ENCODE measurements at regions of chr4 and their contacts with region 1.

Region 1: GRCh38 chr4:123102897-123103471 is 180.6 kb upstream of the NUDT6 start:
- DNase-seq: peak in 3 of 14 experiments; percentile 24 to 26 (median 25)
- ATAC-seq: peak; percentile 37
- H3K4me3 ChIP-seq: no peak overlapping the region
- H3K4me3 Mint-ChIP-seq: no peak overlapping the region
- H3K27ac ChIP-seq: no peak overlapping the region
- H3K27ac Mint-ChIP-seq: no peak overlapping the region
- H3K4me1 ChIP-seq: no peaks in the 10 kb centered on the region
- H3K4me1 Mint-ChIP-seq: no peaks in the 10 kb centered on the region
- H3K27me3 ChIP-seq: no peaks in the 10 kb centered on the region
- H3K27me3 Mint-ChIP-seq: no peaks in the 10 kb centered on the region
- CTCF ChIP-seq: peak; percentile 64

Region 2: GRCh38 chr4:123127218-123127617 is 24.2 kb after region 1 on chr4:
- CTCF ChIA-PET with region 1: no interaction called
- POLR2A ChIA-PET with region 1: no interaction called
- intact Hi-C with region 1: no loop called
- DNase-seq: no peak
- ATAC-seq: no peak
- H3K4me3 ChIP-seq: no peak overlapping the region
- H3K4me3 Mint-ChIP-seq: no peak overlapping the region
- H3K27ac ChIP-seq: no peak overlapping the region
- H3K27ac Mint-ChIP-seq: no peak overlapping the region
- H3K4me1 ChIP-seq: no peaks in the 10 kb centered on the region
- H3K4me1 Mint-ChIP-seq: no peaks in the 10 kb centered on the region
- H3K27me3 ChIP-seq: no peaks in the 10 kb centered on the region
- H3K27me3 Mint-ChIP-seq: no peaks in the 10 kb centered on the region
- CTCF ChIP-seq: no peak

Region 3: DNA sequence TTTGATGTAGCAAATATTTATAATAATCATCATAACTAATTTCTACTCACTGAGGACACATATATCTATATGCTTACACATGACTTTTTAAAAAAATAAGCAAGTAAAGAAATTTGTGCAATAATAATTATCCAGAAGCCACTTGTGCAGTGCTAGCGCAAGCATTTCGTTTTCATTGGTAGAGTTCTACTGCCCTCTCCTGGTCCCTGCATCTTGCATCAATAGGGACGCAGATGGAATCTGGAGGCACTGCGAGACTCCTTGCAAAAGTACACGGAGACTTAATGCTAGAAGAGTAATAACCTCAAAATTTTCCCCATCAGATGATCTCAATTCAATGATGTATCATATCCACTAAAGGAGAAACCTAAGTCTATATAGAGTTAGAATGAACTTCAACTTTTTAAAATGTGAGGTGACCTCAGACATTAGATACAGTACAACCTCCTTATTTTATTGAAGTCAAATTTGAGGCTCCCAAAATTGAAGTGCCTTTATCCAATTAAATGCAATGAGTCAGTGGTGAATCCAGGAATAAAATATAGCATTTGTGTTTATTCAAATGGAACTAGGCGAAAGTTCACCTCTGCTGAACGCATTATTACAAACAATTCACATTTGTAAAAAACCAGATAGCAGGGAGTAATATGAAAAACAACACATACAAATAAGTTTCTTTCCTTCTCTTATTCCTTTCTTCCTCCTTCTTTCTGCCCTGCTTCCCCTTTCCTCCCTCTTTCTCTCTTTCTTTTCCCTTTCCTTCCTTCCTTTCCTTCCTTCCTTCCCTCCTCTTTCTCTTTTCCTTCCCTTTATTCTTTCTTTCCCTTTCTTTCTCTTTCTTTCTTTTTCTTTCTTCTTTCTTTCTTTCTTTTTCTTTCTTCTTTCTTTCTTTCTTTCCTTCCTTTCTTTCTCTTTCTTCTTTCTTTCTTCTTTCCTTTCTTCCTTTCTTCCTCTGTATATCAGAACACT is 1159.5 kb after region 1 on chr4:
- CTCF ChIA-PET with region 1: no interaction called
- POLR2A ChIA-PET with region 1: no interaction called
- intact Hi-C with region 1: loop called in 1 of 2 experiments (anchors 2 kb)
- DNase-seq: peak in 6 of 14 experiments; percentile 5 to 56 (median 32)
- ATAC-seq: no peak
- H3K4me3 ChIP-seq: no peak overlapping the region
- H3K4me3 Mint-ChIP-seq: no peak overlapping the region
- H3K27ac ChIP-seq: no peak overlapping the region
- H3K27ac Mint-ChIP-seq: no peak overlapping the region
- H3K4me1 ChIP-seq: no peaks in the 10 kb centered on the region
- H3K4me1 Mint-ChIP-seq: no peaks in the 10 kb centered on the region
- H3K27me3 ChIP-seq: no peaks in the 10 kb centered on the region
- H3K27me3 Mint-ChIP-seq: no peaks in the 10 kb centered on the region
- CTCF ChIP-seq: peak; percentile 2

Region 4: GRCh38 chr4:124322234-124323065 is 1219.5 kb after region 1 on chr4:
- CTCF ChIA-PET with region 1: no interaction called
- POLR2A ChIA-PET with region 1: no interaction called
- intact Hi-C with region 1: loop called in 1 of 2 experiments (anchors 2 kb)
- DNase-seq: peak in 3 of 14 experiments; percentile 18 to 21 (median 20)
- ATAC-seq: no peak
- H3K4me3 ChIP-seq: no peak overlapping the region
- H3K4me3 Mint-ChIP-seq: no peak overlapping the region
- H3K27ac ChIP-seq: no peak overlapping the region
- H3K27ac Mint-ChIP-seq: no peak overlapping the region
- H3K4me1 ChIP-seq: no peaks in the 10 kb centered on the region
- H3K4me1 Mint-ChIP-seq: no peaks in the 10 kb centered on the region
- H3K27me3 ChIP-seq: no peaks in the 10 kb centered on the region
- H3K27me3 Mint-ChIP-seq: no peaks in the 10 kb centered on the region
- CTCF ChIP-seq: peak; percentile 67